MCF 10A (cell line): ENCODE measurements at regions of chr1 and their contacts with region 1.

Region 1: GRCh38 chr1:196651637-196652215 is at the start of gene CFH:
- DNase-seq: peak; percentile 78
- H3K4me3 Mint-ChIP-seq: peak within 1 kb of the TSS; percentile 79
- H3K27ac Mint-ChIP-seq: peak within 1 kb of the TSS; percentile 95
- H3K4me1 Mint-ChIP-seq: peaks cover 26% of the 10 kb centered on the region
- H3K27me3 Mint-ChIP-seq: no peaks in the 10 kb centered on the region
- CTCF ChIP-seq: no peak
- total RNA-seq, gene CFH: 21.3 and 31.6 TPM in 2 replicates

Region 2: DNA sequence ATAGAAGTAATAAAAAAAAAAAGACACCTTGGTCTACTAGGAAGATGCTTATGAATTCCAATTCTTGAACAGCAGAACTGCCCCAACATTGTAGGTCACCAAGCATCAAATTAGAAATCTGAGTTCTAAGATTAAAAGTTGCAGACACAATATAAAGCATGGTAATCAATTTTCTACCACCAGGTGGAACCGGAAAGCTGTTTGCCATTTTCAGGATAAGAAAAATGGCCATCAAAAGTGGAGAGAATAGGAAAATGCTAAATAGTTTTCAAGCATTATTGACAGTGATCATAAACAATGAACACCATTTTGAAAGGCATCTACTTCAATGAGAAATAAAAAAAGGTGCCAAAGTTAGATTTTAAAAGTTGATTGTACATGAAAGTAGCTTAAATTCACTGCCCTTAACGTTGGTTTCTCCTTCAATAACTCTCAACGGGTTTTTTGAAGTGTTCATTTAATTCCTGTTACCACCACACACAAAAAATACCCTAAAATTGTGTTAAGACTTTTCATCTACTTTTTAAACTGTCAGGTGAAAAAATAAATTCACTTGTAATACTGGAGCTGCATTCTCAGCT is 296.4 kb before region 1 on chr1:
- CTCF ChIA-PET with region 1: interaction called, 51 read pairs
- POLR2A ChIA-PET with region 1: interaction called, 3 read pairs
- intact Hi-C with region 1: loop called (anchors 1 kb)
- DNase-seq: peak; percentile 62
- H3K4me3 Mint-ChIP-seq: no peak overlapping the region
- H3K27ac Mint-ChIP-seq: no peak overlapping the region
- H3K4me1 Mint-ChIP-seq: no peaks in the 10 kb centered on the region
- H3K27me3 Mint-ChIP-seq: no peaks in the 10 kb centered on the region
- CTCF ChIP-seq: peak; percentile 79